PC-3 (cell line): ENCODE measurements at regions of chr9 and their contacts with region 1.

Region 1: GRCh38 chr9:23702311-23702922 is 123.6 kb downstream of the ELAVL2 start:
- DNase-seq: peak; percentile 71
- ATAC-seq: peak; percentile 44
- H3K4me3 ChIP-seq: no peak overlapping the region
- H3K27ac ChIP-seq: peak overlapping the region; percentile 52
- H3K4me1 ChIP-seq: peaks cover 58% of the 10 kb centered on the region
- H3K27me3 ChIP-seq: no peaks in the 10 kb centered on the region
- CTCF ChIP-seq: peak; percentile 70

Region 2: GRCh38 chr9:22528485-22528884 is 1173.9 kb before region 1 on chr9:
- CTCF ChIA-PET with region 1: interaction called, 3 read pairs
- POLR2A ChIA-PET with region 1: no interaction called
- intact Hi-C with region 1: loop called (anchors 10 kb)
- DNase-seq: peak; percentile 53
- ATAC-seq: no peak
- H3K4me3 ChIP-seq: no peak overlapping the region
- H3K27ac ChIP-seq: no peak overlapping the region
- H3K4me1 ChIP-seq: peaks cover 13% of the 10 kb centered on the region
- H3K27me3 ChIP-seq: no peaks in the 10 kb centered on the region
- CTCF ChIP-seq: peak; percentile 70

Region 3: GRCh38 chr9:23123048-23123632 is 579.3 kb before region 1 on chr9:
- CTCF ChIA-PET with region 1: no interaction called
- POLR2A ChIA-PET with region 1: no interaction called
- intact Hi-C with region 1: loop called (anchors 1 kb)
- DNase-seq: peak; percentile 52
- ATAC-seq: no peak; the same call in 1 of the 2 replicates
- H3K4me3 ChIP-seq: no peak overlapping the region
- H3K27ac ChIP-seq: no peak overlapping the region
- H3K4me1 ChIP-seq: no peaks in the 10 kb centered on the region
- H3K27me3 ChIP-seq: no peaks in the 10 kb centered on the region
- CTCF ChIP-seq: peak; percentile 78

Region 4: GRCh38 chr9:23342291-23342690 is 360.1 kb before region 1 on chr9:
- CTCF ChIA-PET with region 1: interaction called, 3 read pairs
- POLR2A ChIA-PET with region 1: no interaction called
- intact Hi-C with region 1: loop called (anchors 10 kb)
- DNase-seq: peak; percentile 67
- ATAC-seq: peak; percentile 91
- H3K4me3 ChIP-seq: peak overlapping the region; percentile 30; the same call in 1 of the 2 replicates
- H3K27ac ChIP-seq: no peak overlapping the region
- H3K4me1 ChIP-seq: peaks cover 24% of the 10 kb centered on the region
- H3K27me3 ChIP-seq: no peaks in the 10 kb centered on the region
- CTCF ChIP-seq: no peak

Region 5: GRCh38 chr9:23526806-23527205 is 175.6 kb before region 1 on chr9:
- CTCF ChIA-PET with region 1: no interaction called
- POLR2A ChIA-PET with region 1: no interaction called
- intact Hi-C with region 1: no loop called
- DNase-seq: peak; percentile 63
- ATAC-seq: peak; percentile 79
- H3K4me3 ChIP-seq: no peak overlapping the region
- H3K27ac ChIP-seq: peak overlapping the region; percentile 22; the same call in 1 of the 2 replicates
- H3K4me1 ChIP-seq: peaks cover 15% of the 10 kb centered on the region
- H3K27me3 ChIP-seq: no peaks in the 10 kb centered on the region
- CTCF ChIP-seq: no peak

Region 6: DNA sequence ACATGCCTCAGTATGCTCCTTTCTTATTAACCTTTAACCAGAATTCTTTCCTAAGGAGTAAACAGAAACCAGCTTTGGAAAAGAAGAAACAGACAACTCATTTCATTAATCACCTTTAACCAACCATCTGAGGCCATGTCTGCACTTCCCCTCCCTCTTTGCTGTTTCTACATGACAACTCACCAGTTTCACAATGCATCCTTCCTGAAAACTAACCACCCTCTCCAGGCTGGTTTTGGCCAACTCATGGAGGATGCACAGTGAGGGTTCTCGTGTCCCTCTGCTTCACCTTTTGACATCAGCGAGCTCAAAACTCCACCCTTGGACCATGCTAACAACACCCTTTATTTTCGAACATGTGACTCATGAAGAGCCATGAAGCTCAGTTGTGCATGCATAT is 120.5 kb before region 1 on chr9:
- CTCF ChIA-PET with region 1: interaction called, 5 read pairs
- POLR2A ChIA-PET with region 1: interaction called, 3 read pairs
- intact Hi-C with region 1: loop called (anchors 1 kb)
- DNase-seq: peak; percentile 93
- ATAC-seq: peak; percentile 70
- H3K4me3 ChIP-seq: no peak overlapping the region
- H3K27ac ChIP-seq: peak overlapping the region; percentile 100
- H3K4me1 ChIP-seq: peaks cover 47% of the 10 kb centered on the region
- H3K27me3 ChIP-seq: no peaks in the 10 kb centered on the region
- CTCF ChIP-seq: no peak

Region 7: DNA sequence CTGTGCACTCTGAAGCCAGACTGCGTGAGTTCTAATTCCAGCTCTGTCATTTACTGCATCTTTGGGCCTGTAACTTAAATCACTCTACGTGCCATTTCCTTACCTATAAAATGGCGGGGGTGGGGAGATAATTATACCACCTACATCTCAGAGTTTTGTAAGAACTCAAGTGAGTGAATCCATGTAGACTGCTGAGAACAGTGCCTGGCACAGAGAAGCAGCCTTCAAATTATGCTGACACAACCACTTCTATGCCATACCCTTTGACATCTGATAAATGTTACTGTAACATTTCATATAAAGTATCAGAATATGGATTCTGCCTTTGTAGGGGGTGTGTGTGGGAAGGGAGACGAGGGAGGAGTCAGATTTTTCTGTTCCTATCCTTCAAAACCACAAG is 95.9 kb after region 1 on chr9:
- CTCF ChIA-PET with region 1: interaction called, 17 read pairs
- POLR2A ChIA-PET with region 1: no interaction called
- intact Hi-C with region 1: no loop called
- DNase-seq: no peak
- ATAC-seq: no peak
- H3K4me3 ChIP-seq: no peak overlapping the region
- H3K27ac ChIP-seq: no peak overlapping the region
- H3K4me1 ChIP-seq: no peaks in the 10 kb centered on the region
- H3K27me3 ChIP-seq: no peaks in the 10 kb centered on the region
- CTCF ChIP-seq: no peak